CD4-positive, alpha-beta T cell (primary cell): ENCODE measurements at regions of chr17 and their contacts with region 1.

Region 1: DNA sequence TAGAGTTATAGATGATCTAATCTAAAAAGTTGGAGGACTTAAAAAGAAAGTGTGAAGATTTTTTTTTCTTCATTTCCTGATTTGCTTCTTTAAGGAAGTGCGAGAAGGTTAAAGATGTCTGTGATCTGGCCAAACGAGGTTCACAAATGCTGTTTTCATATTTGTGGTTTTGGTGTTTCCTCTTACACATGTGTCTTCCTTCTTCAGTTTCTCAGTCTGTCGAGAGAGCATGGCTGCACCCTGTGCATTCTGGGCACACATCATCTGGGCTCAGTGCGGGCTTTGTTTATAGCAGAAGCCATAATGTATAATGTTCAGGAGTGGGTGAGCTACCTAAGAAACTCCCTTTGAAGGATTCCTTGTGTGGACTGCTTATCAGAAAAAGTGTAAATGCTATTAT is 260.4 kb upstream of the TBX2 start:
- DNase-seq: peak; percentile 25 to 91 (median 49)
- ATAC-seq: peak; percentile 98
- H3K4me3 ChIP-seq: no peak overlapping the region
- H3K4me3 Mint-ChIP-seq: peak overlapping the region; percentile 52
- H3K27ac ChIP-seq: peak overlapping the region in 1 of 2 donors; percentile 38
- H3K27ac Mint-ChIP-seq: peak overlapping the region; percentile 31
- H3K4me1 ChIP-seq: peaks cover 13% of the 10 kb centered on the region
- H3K4me1 Mint-ChIP-seq: peaks cover 43% of the 10 kb centered on the region
- H3K27me3 ChIP-seq: no peaks in the 10 kb centered on the region
- H3K27me3 Mint-ChIP-seq: no peaks in the 10 kb centered on the region
- CTCF ChIP-seq: no peak

Region 2: GRCh38 chr17:61000911-61001310 is 138.3 kb before region 1 on chr17:
- CTCF ChIA-PET with region 1: no interaction called
- POLR2A ChIA-PET with region 1: no interaction called
- intact Hi-C with region 1: no loop called
- DNase-seq: no peak
- ATAC-seq: no peak
- H3K4me3 ChIP-seq: no peak overlapping the region
- H3K4me3 Mint-ChIP-seq: no peak overlapping the region
- H3K27ac ChIP-seq: no peak overlapping the region
- H3K27ac Mint-ChIP-seq: no peak overlapping the region
- H3K4me1 ChIP-seq: no peaks in the 10 kb centered on the region
- H3K4me1 Mint-ChIP-seq: no peaks in the 10 kb centered on the region
- H3K27me3 ChIP-seq: no peaks in the 10 kb centered on the region
- H3K27me3 Mint-ChIP-seq: no peaks in the 10 kb centered on the region
- CTCF ChIP-seq: no peak

Region 3: GRCh38 chr17:61157246-61157886 is 18.1 kb after region 1 on chr17:
- CTCF ChIA-PET with region 1: no interaction called
- POLR2A ChIA-PET with region 1: no interaction called
- intact Hi-C with region 1: no loop called
- DNase-seq: no peak
- ATAC-seq: no peak
- H3K4me3 ChIP-seq: no peak overlapping the region
- H3K4me3 Mint-ChIP-seq: no peak overlapping the region
- H3K27ac ChIP-seq: no peak overlapping the region
- H3K27ac Mint-ChIP-seq: no peak overlapping the region
- H3K4me1 ChIP-seq: peaks cover 4% of the 10 kb centered on the region
- H3K4me1 Mint-ChIP-seq: peaks cover 28% of the 10 kb centered on the region
- H3K27me3 ChIP-seq: no peaks in the 10 kb centered on the region
- H3K27me3 Mint-ChIP-seq: no peaks in the 10 kb centered on the region
- CTCF ChIP-seq: no peak

Region 4: GRCh38 chr17:61221597-61222460 is 82.6 kb after region 1 on chr17:
- CTCF ChIA-PET with region 1: no interaction called
- POLR2A ChIA-PET with region 1: interaction called, 3 read pairs
- intact Hi-C with region 1: loop called in 1 of 2 experiments (anchors 5 kb)
- DNase-seq: peak in 3 of 14 experiments; percentile 28 to 44 (median 37)
- ATAC-seq: peak; percentile 40
- H3K4me3 ChIP-seq: peak overlapping the region; percentile 49
- H3K4me3 Mint-ChIP-seq: peak overlapping the region; percentile 81
- H3K27ac ChIP-seq: peak overlapping the region in 1 of 2 donors; percentile 17
- H3K27ac Mint-ChIP-seq: peak overlapping the region; percentile 76
- H3K4me1 ChIP-seq: peaks cover 24% of the 10 kb centered on the region
- H3K4me1 Mint-ChIP-seq: peaks cover 52% of the 10 kb centered on the region
- H3K27me3 ChIP-seq: no peaks in the 10 kb centered on the region
- H3K27me3 Mint-ChIP-seq: no peaks in the 10 kb centered on the region
- CTCF ChIP-seq: no peak